GM10248 (cell line): ENCODE measurements at regions of chr6 and their contacts with region 1.

Region 1: GRCh38 chr6:152863618-152864326 is 113.2 kb downstream of the VIP start:
- DNase-seq: peak; percentile 28
- CTCF ChIP-seq: peak; percentile 60

Region 2: DNA sequence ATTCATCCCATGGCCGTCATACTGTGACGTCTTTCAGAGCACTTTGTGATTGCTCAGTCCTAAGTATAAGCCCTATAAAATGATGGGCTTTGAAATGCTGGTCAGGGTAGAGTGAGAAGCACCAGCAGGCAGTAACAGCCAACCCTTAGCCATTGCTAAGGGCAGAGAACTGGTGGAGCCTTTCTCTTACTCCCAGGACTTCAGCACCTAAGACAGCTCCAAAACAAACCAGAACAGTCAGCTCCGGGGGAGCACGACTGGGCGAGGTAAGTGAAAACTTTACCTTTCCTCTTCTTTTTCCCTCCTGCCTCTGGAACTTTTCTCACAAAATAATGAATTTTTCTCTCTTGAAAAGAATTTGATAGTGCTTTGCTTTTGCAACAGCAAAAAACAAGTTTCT is 113.1 kb before region 1 on chr6 and contains the start of gene VIP:
- CTCF ChIA-PET with region 1: no interaction called
- POLR2A ChIA-PET with region 1: no interaction called
- DNase-seq: no peak
- CTCF ChIP-seq: no peak

Region 3: DNA sequence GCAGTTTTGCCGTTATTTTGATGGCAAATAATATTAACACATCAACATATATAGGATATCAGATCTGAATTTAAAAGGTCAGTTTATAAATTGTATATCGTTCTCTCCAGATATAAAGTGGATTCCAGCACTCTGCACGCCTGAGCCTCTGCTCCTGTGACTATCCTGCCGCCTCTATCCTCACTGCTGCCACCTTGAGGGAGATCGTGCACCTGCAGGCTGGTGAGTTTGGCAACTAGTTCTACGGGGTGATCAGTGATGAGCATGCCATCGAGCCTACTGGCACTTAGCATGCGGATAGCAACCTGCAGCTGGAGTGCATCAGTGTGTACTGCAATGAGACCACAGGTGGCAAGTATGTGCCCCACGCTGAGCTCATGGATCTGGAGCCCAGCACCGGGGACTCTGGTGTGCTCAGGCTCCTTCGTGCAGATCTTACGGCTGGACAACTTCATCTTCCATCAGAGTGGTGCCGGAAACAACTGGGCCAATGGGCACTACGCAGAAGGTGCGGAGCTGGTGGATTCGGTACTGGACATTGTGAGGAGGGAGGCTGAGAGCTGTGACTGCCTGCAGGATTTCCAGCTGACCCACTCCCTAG is 34.1 kb after region 1 on chr6:
- CTCF ChIA-PET with region 1: interaction called, 10 read pairs
- POLR2A ChIA-PET with region 1: no interaction called
- DNase-seq: peak; percentile 62
- CTCF ChIP-seq: peak; percentile 91

Region 4: DNA sequence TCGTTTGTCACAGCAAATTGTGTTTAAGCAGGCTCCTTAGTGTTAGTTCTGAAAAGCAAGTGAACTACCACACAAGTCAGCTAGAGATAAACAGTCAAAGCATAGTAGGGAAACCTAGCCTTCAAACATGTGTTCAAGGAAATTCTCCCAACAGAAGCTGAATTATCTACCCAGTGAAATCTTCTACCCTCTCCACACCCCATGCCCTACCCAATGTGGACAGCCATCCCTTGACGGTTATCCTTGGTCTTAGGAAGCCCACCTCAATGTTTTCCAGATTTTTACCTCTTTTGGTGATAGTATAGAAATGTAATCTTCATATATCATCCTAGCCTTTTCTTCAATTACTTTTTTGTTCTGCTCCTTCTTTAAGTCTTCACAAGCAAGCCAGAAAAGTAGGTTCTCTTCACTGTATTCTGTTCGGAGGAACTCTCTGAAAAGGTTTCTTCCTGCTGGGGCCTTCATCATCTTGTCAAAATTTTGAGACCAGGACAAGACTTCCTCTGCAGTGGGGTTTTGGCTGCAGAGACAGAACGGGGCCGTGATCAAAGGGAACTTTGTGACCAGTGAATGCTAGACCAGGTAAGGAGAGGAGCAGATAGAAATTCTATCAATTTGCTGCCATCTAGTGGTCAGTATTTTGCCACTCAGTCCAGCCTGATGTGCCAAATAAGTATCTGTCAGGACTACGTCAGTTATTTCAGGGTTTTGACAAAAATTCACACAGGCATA is 160.4 kb after region 1 on chr6:
- CTCF ChIA-PET with region 1: interaction called, 11 read pairs
- POLR2A ChIA-PET with region 1: no interaction called
- DNase-seq: peak; percentile 57
- CTCF ChIP-seq: peak; percentile 87

Region 5: GRCh38 chr6:153108315-153108714 is 244.5 kb after region 1 on chr6:
- CTCF ChIA-PET with region 1: no interaction called
- POLR2A ChIA-PET with region 1: no interaction called
- DNase-seq: no peak
- CTCF ChIP-seq: no peak